Activated B cell treated with CpG ODN at 0.5 μM for 24 hours (primary cell): ENCODE measurements at regions of chrX and their contacts with region 1.

Region 1: GRCh38 chrX:12894074-12895030 is 12.1 kb upstream of the TLR8 start:
- DNase-seq: peak; percentile 21
- ATAC-seq: peak; percentile 58
- H3K4me3 Mint-ChIP-seq: peak overlapping the region; percentile 41
- H3K27ac Mint-ChIP-seq: peak overlapping the region; percentile 41
- H3K4me1 Mint-ChIP-seq: peaks cover 52% of the 10 kb centered on the region
- H3K27me3 Mint-ChIP-seq: no peaks in the 10 kb centered on the region
- CTCF ChIP-seq: no peak

Region 2: DNA sequence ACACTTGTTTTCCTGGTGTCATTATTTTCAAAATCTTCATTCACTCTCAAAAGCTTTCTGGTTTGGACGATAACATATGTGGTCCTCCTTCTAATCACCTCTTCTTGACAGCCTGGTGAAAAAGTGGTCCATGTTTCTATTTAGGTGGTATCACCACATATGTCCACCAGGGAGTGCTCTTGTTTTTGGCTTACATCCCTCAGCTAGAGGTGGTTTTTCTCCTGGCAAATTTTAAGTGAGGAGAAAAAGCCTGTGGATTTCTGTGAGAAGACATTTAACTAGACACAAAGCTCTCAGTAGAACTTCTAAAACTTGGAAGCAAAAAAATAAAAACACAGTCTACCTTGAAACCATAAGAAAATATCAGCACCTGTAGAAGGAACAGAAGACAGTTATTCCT is 814.1 kb before region 1 on chrX:
- CTCF ChIA-PET with region 1: no interaction called
- POLR2A ChIA-PET with region 1: no interaction called
- intact Hi-C with region 1: loop called (anchors 10 kb)
- DNase-seq: no peak
- ATAC-seq: no peak
- H3K4me3 Mint-ChIP-seq: no peak overlapping the region
- H3K27ac Mint-ChIP-seq: no peak overlapping the region
- H3K4me1 Mint-ChIP-seq: no peaks in the 10 kb centered on the region
- H3K27me3 Mint-ChIP-seq: peaks cover 2% of the 10 kb centered on the region
- CTCF ChIP-seq: no peak

Region 3: GRCh38 chrX:12814420-12814819 is 79.9 kb before region 1 on chrX:
- CTCF ChIA-PET with region 1: interaction called, 67 read pairs
- POLR2A ChIA-PET with region 1: interaction called, 9 read pairs
- intact Hi-C with region 1: loop called (anchors 1 kb)
- DNase-seq: no peak
- ATAC-seq: peak; percentile 71
- H3K4me3 Mint-ChIP-seq: no peak overlapping the region
- H3K27ac Mint-ChIP-seq: no peak overlapping the region
- H3K4me1 Mint-ChIP-seq: no peaks in the 10 kb centered on the region
- H3K27me3 Mint-ChIP-seq: no peaks in the 10 kb centered on the region
- CTCF ChIP-seq: no peak

Region 4: GRCh38 chrX:12866451-12867377 is 27.6 kb before region 1 on chrX and contains the start of gene TLR7:
- CTCF ChIA-PET with region 1: no interaction called
- POLR2A ChIA-PET with region 1: no interaction called
- intact Hi-C with region 1: loop called (anchors 1 kb)
- DNase-seq: no peak
- ATAC-seq: peak; percentile 51
- H3K4me3 Mint-ChIP-seq: peak within 1 kb of the TSS; percentile 84
- H3K27ac Mint-ChIP-seq: peak within 1 kb of the TSS; percentile 95
- H3K4me1 Mint-ChIP-seq: peaks cover 57% of the 10 kb centered on the region
- H3K27me3 Mint-ChIP-seq: no peaks in the 10 kb centered on the region
- CTCF ChIP-seq: no peak
- total RNA-seq, gene TLR7: 4.6 and 5.4 TPM in 2 replicates